Right cardiac atrium (tissue), 5 donors: ENCODE measurements at regions of chrX and their contacts with region 1.

Region 1: GRCh38 chrX:134764212-134764785 is 106.0 kb upstream of the PLAC1 start:
- DNase-seq: no peak
- ATAC-seq: no peak
- H3K4me3 ChIP-seq: no peak overlapping the region
- H3K27ac ChIP-seq: no peak overlapping the region
- H3K4me1 ChIP-seq: peaks cover 2% of the 10 kb centered on the region
- H3K27me3 ChIP-seq: no peaks in the 10 kb centered on the region

Region 2: GRCh38 chrX:134484039-134484438 is 280.3 kb before region 1 on chrX:
- intact Hi-C with region 1: loop called in 1 of 4 experiments (anchors 10 kb)
- DNase-seq: no peak
- ATAC-seq: no peak
- H3K4me3 ChIP-seq: no peak overlapping the region
- H3K27ac ChIP-seq: no peak overlapping the region
- H3K4me1 ChIP-seq: no peaks in the 10 kb centered on the region
- H3K27me3 ChIP-seq: no peaks in the 10 kb centered on the region